Testis (tissue), 5 donors: ENCODE measurements at regions of chr17 and their contacts with region 1.

Region 1: DNA sequence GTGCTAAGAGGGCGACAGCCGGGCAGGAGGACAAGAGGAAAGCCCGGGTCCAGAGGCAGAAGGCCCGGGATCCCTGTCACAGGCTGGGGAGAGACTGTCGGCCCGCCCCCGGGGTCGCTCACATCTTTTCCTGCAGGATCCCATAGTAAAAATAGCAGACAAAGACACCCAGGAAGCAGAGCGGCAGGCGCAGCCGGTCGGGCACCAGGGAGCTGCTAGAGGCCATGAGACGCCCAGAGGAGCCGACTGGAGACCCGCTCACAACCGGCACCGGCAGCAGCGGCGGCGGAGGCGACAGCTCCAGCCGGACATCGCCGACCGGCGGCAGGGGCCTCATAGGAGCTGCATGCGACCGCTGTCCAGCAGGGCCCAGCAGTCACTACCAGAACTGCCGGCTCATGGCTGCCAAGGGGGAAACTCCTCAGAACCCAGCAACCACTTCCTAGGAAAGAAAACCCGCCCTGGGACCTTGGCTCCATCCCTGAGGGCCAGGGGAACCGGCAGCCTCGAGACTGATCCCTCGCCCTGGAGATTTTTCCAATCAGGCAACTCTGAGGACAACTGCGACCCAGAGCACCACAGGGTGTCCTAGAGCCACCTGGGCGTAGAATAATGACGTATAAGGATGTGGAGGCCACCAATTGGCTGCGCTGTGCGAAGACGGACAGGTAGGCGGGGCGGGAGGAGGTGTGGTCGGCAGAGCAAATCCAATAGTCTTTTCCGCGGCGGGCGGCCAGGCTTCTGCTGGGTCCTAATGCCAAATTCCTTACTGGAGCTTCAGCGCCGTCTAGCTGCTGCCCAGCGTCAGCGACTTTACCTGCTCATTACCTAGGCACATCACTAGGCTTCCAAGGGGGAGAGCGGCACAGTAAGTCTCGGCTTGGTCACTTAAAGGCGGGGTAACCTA is at the start of gene SLC35B1:
- DNase-seq: peak; percentile 100
- H3K4me3 ChIP-seq: peak within 1 kb of the TSS; percentile 86 to 87
- H3K27ac ChIP-seq: peak within 1 kb of the TSS; percentile 94 to 97
- H3K4me1 ChIP-seq: peaks cover 16% of the 10 kb centered on the region
- H3K27me3 ChIP-seq: no peaks in the 10 kb centered on the region
- CTCF ChIP-seq: peak; percentile 64 to 82 (median 70)
- POLR2A ChIP-seq: no peak
- total RNA-seq, gene SLC35B1: 39.9 to 45.4 TPM

Region 2: GRCh38 chr17:49656247-49656646 is 51.6 kb before region 1 on chr17:
- intact Hi-C with region 1: no loop called
- DNase-seq: no peak
- H3K4me3 ChIP-seq: no peak overlapping the region
- H3K27ac ChIP-seq: no peak overlapping the region
- H3K4me1 ChIP-seq: peaks cover 5% of the 10 kb centered on the region
- H3K27me3 ChIP-seq: no peaks in the 10 kb centered on the region
- CTCF ChIP-seq: no peak
- POLR2A ChIP-seq: no peak

Region 3: GRCh38 chr17:49748791-49749190 is 40.9 kb after region 1 on chr17:
- intact Hi-C with region 1: no loop called
- DNase-seq: no peak
- H3K4me3 ChIP-seq: no peak overlapping the region
- H3K27ac ChIP-seq: no peak overlapping the region
- H3K4me1 ChIP-seq: no peaks in the 10 kb centered on the region
- H3K27me3 ChIP-seq: no peaks in the 10 kb centered on the region
- CTCF ChIP-seq: no peak
- POLR2A ChIP-seq: no peak

Region 4: GRCh38 chr17:49779739-49780231 is 71.9 kb after region 1 on chr17:
- intact Hi-C with region 1: loop called (anchors 5 kb)
- DNase-seq: peak; percentile 53
- H3K4me3 ChIP-seq: no peak overlapping the region
- H3K27ac ChIP-seq: no peak overlapping the region
- H3K4me1 ChIP-seq: peaks cover 16% of the 10 kb centered on the region
- H3K27me3 ChIP-seq: no peaks in the 10 kb centered on the region
- CTCF ChIP-seq: peak in 2 of 3 experiments; percentile 39 to 49
- POLR2A ChIP-seq: no peak

Region 5: DNA sequence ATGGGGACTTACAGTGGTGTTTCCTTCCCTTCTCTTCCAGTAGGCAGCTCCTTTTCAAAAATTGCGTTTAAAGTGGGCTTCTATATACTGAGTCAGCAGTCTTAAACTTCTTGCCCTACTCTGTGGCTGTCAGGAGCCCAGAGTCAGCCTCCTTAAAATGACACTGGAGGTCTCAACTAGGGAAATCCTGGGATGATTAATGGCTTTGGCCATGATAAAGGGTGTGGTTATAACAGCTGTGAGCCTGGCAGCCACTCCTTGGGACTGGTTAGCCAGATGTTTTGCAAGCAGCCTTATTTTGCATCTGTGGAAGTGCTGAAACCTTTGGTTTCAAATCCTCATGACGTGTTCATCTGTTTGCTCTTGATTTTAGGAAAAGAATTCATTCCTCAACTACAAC is 115.0 kb after region 1 on chr17:
- intact Hi-C with region 1: no loop called
- DNase-seq: no peak
- H3K4me3 ChIP-seq: no peak overlapping the region
- H3K27ac ChIP-seq: no peak overlapping the region
- H3K4me1 ChIP-seq: no peaks in the 10 kb centered on the region
- H3K27me3 ChIP-seq: no peaks in the 10 kb centered on the region
- CTCF ChIP-seq: no peak
- POLR2A ChIP-seq: no peak

Region 6: DNA sequence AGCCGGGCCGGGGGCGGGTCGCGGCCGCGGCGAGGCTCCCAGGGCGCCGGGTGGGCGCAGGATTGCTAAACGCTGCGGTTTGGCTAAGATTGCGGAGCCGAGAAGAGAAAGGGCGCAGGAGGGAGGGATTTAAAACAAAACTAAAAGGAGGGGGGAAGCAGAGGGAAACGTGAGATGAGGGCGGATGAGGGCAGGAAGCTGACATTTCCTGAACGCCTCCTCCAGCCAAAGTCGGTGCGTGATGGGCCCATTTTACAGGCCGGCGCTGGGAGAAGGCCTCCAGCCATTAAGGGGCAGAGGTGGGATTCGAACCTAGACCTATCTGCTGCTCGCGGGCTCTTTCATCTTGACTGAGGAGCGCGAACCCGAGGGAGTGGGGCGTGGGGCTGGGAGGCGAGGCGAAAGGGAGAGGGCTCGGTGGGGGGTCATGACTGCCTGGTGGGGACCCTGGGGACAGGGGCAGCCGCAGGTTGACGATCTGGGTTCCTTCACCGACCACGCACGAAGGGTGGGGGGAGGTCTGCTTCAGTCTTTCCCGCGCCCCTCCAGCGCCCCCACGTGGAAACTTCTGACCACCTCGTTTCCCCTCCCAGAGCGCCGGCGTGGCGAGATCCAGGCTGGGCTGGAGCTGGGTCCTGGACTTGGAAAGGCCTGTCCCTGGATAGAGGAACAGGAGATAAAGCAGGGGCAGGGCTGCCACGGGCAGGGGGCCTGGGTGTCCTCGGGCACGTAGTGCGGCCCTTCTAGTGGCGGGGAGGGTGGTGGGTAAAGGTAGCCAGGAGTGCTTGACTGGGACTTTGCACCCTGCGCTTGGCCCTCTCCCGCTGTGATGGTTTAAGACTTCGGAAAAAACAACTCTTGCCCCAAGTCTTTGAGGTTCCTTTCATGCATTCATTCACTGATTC is 143.8 kb after region 1 on chr17:
- intact Hi-C with region 1: loop called (anchors 5 kb)
- DNase-seq: peak; percentile 75
- H3K4me3 ChIP-seq: peak overlapping the region; percentile 40 to 55
- H3K27ac ChIP-seq: no peak overlapping the region
- H3K4me1 ChIP-seq: peaks cover 4% of the 10 kb centered on the region
- H3K27me3 ChIP-seq: no peaks in the 10 kb centered on the region
- CTCF ChIP-seq: peak; percentile 33 to 65 (median 52)
- POLR2A ChIP-seq: no peak